Activated T-helper 1 cell treated with anti-CD3 and anti-CD28 coated beads, Interleukin-12 subunit alpha, Interleukin-12 subunit beta, Interleukin-2, Interleukin-4 antibody, amounts not matched to agents 30 ng/mL and 10 ng/mL and 1 ng/mL, durations not matched to agents 14 hours and 24 hours and 36 hours (primary cell): ENCODE measurements at regions of chr19 and their contacts with region 1.

Region 1: DNA sequence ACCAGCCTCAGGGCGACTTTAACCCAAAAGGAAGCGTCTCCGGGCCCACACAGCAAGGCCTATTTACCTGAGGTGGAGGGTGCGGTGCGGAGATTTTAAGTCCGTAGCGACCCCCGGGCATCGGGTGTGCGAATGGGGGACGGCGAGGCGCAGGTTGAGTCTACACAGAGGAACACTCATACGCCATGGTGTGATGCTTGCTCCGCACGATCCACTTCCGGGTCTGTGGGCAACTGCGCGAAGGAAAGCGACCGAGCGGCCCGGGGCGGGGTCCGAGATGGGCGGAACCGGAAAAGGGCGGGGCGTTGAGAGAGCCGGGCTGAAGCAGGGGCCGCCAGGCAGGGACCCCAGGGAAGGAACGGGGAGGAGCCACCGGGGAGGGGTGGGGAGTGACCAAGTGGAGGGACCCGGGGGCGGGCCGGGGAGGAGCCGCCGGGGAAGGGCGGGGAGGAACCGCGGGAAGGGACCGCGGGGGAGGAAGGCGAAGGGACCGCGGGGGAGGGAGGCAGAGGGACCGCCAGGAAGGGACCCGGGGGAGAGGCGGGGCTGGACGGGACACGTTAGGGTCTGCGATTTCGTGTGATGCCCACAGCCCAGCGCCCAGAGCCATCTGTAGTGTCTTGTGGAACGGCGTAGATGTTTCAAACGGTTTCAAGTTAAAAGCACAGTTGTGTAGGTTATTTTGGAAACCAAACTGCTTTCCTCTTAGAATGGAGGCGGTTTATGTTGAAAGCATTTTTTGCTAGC is at the start of gene ZNF160:
- DNase-seq: peak; percentile 98
- H3K4me3 Mint-ChIP-seq: peak within 1 kb of the TSS; percentile 92
- H3K27ac Mint-ChIP-seq: peak within 1 kb of the TSS; percentile 95
- H3K4me1 Mint-ChIP-seq: peaks cover 23% of the 10 kb centered on the region
- H3K27me3 Mint-ChIP-seq: no peaks in the 10 kb centered on the region
- total RNA-seq, gene ZNF160: 26.0 and 27.8 TPM in 2 replicates

Region 2: GRCh38 chr19:52570000-52570861 is 533.1 kb before region 1 on chr19 and contains the start of gene ZNF701:
- intact Hi-C with region 1: loop called (anchors 1 kb)
- DNase-seq: peak; percentile 94
- H3K4me3 Mint-ChIP-seq: peak within 1 kb of the TSS; percentile 94
- H3K27ac Mint-ChIP-seq: peak within 1 kb of the TSS; percentile 94
- H3K4me1 Mint-ChIP-seq: peaks cover 20% of the 10 kb centered on the region
- H3K27me3 Mint-ChIP-seq: no peaks in the 10 kb centered on the region
- total RNA-seq, gene ZNF701: 16.0 and 18.3 TPM in 2 replicates

Region 3: DNA sequence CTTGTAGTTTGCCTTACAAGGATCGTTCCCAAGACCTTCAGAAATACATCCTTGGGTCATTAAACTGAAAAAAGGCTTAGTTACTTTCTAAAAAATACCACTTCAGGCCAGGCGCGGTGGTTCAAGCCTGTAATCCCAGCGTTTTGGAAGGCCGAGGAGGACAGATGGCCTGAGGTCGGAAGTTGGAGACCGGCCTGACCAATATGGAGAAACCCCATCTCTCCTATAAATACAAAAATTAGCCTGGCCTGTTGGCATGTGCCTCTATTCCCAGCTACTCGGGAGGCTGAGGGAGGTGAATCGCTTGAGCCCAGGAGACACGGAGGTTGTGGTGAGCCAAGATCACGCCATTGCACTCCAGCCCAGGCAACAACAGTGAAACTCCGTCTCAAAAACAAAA is 279.7 kb before region 1 on chr19:
- intact Hi-C with region 1: loop called (anchors 1 kb)
- DNase-seq: no peak
- H3K4me3 Mint-ChIP-seq: no peak overlapping the region
- H3K27ac Mint-ChIP-seq: no peak overlapping the region
- H3K4me1 Mint-ChIP-seq: peaks cover 9% of the 10 kb centered on the region
- H3K27me3 Mint-ChIP-seq: no peaks in the 10 kb centered on the region

Region 4: GRCh38 chr19:52942386-52943133 is 160.8 kb before region 1 on chr19:
- intact Hi-C with region 1: loop called (anchors 1 kb)
- DNase-seq: peak; percentile 94
- H3K4me3 Mint-ChIP-seq: peak overlapping the region; percentile 89
- H3K27ac Mint-ChIP-seq: peak overlapping the region; percentile 88
- H3K4me1 Mint-ChIP-seq: peaks cover 27% of the 10 kb centered on the region
- H3K27me3 Mint-ChIP-seq: peaks cover 2% of the 10 kb centered on the region

Region 5: GRCh38 chr19:53076977-53077376 is 26.4 kb before region 1 on chr19:
- intact Hi-C with region 1: no loop called
- DNase-seq: no peak
- H3K4me3 Mint-ChIP-seq: no peak overlapping the region
- H3K27ac Mint-ChIP-seq: no peak overlapping the region
- H3K4me1 Mint-ChIP-seq: no peaks in the 10 kb centered on the region
- H3K27me3 Mint-ChIP-seq: no peaks in the 10 kb centered on the region

Region 6: GRCh38 chr19:53158119-53158656 is 54.8 kb after region 1 on chr19:
- intact Hi-C with region 1: loop called (anchors 1 kb)
- DNase-seq: peak; percentile 16
- H3K4me3 Mint-ChIP-seq: peak overlapping the region; percentile 85
- H3K27ac Mint-ChIP-seq: peak overlapping the region; percentile 71
- H3K4me1 Mint-ChIP-seq: peaks cover 15% of the 10 kb centered on the region
- H3K27me3 Mint-ChIP-seq: no peaks in the 10 kb centered on the region

Region 7: GRCh38 chr19:53271955-53272443 is 168.6 kb after region 1 on chr19:
- intact Hi-C with region 1: no loop called
- DNase-seq: no peak
- H3K4me3 Mint-ChIP-seq: no peak overlapping the region
- H3K27ac Mint-ChIP-seq: no peak overlapping the region
- H3K4me1 Mint-ChIP-seq: no peaks in the 10 kb centered on the region
- H3K27me3 Mint-ChIP-seq: no peaks in the 10 kb centered on the region

Region 8: GRCh38 chr19:53394974-53395839 is 291.8 kb after region 1 on chr19 and contains the start of gene ZNF765:
- intact Hi-C with region 1: loop called (anchors 1 kb)
- DNase-seq: peak; percentile 93
- H3K4me3 Mint-ChIP-seq: peak within 1 kb of the TSS; percentile 98
- H3K27ac Mint-ChIP-seq: peak within 1 kb of the TSS; percentile 85
- H3K4me1 Mint-ChIP-seq: peaks cover 27% of the 10 kb centered on the region
- H3K27me3 Mint-ChIP-seq: no peaks in the 10 kb centered on the region
- total RNA-seq, gene ZNF765: 9.2 and 10.8 TPM in 2 replicates